Caco-2 (cell line): ENCODE measurements at regions of chr13 and their contacts with region 1.

Region 1: DNA sequence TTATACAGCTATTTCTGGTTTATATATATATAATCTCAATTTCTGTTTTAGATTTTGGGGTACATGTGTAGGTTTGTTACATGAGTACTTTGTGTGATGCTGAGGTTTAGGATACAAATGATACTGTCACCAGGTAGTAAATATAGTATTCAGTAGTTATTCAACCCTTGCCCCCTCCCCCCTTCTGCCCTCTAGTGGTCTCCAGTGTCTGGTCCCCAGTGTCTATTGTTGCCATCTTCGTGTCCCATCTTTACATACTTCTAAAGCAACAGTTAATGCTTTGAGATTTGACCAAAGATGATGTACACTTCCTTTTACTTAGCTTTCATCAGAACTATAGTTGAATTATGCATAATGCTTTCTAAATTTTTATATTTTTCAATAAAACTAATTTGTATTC is 1623.4 kb upstream of the PRR20A start:
- DNase-seq: peak in 1 of 2 experiments; percentile 52
- H3K4me3 ChIP-seq: no peak overlapping the region
- H3K4me3 Mint-ChIP-seq: no peak overlapping the region
- H3K27ac Mint-ChIP-seq: no peak overlapping the region
- H3K4me1 ChIP-seq: no peaks in the 10 kb centered on the region
- H3K4me1 Mint-ChIP-seq: no peaks in the 10 kb centered on the region
- H3K27me3 ChIP-seq: no peaks in the 10 kb centered on the region
- H3K27me3 Mint-ChIP-seq: no peaks in the 10 kb centered on the region
- CTCF ChIP-seq: peak; percentile 47 to 74

Region 2: GRCh38 chr13:55199134-55199533 is 318.2 kb before region 1 on chr13:
- CTCF ChIA-PET with region 1: no interaction called
- POLR2A ChIA-PET with region 1: no interaction called
- intact Hi-C with region 1: loop called (anchors 10 kb)
- DNase-seq: peak; percentile 26 to 45
- H3K4me3 ChIP-seq: no peak overlapping the region
- H3K4me3 Mint-ChIP-seq: no peak overlapping the region
- H3K27ac Mint-ChIP-seq: no peak overlapping the region
- H3K4me1 ChIP-seq: no peaks in the 10 kb centered on the region
- H3K4me1 Mint-ChIP-seq: no peaks in the 10 kb centered on the region
- H3K27me3 ChIP-seq: no peaks in the 10 kb centered on the region; the same call in 1 of the 2 replicates
- H3K27me3 Mint-ChIP-seq: no peaks in the 10 kb centered on the region
- CTCF ChIP-seq: peak in 1 of 2 experiments; percentile 53